Activated CD8-positive, alpha-beta T cell treated with anti-CD3 and anti-CD28 coated beads, Interleukin-2, amount 10 ng/mL, durations not matched to agents 7 days and 5 days (primary cell): ENCODE measurements at regions of chr14 and their contacts with region 1.

Region 1: GRCh38 chr14:68926236-68926635 is 52.9 kb downstream of the ACTN1 start:
- DNase-seq: peak; percentile 36
- ATAC-seq: no peak
- H3K4me3 Mint-ChIP-seq: no peak overlapping the region
- H3K27ac Mint-ChIP-seq: peak overlapping the region; percentile 54
- H3K4me1 Mint-ChIP-seq: peaks cover 68% of the 10 kb centered on the region
- H3K27me3 Mint-ChIP-seq: no peaks in the 10 kb centered on the region

Region 2: DNA sequence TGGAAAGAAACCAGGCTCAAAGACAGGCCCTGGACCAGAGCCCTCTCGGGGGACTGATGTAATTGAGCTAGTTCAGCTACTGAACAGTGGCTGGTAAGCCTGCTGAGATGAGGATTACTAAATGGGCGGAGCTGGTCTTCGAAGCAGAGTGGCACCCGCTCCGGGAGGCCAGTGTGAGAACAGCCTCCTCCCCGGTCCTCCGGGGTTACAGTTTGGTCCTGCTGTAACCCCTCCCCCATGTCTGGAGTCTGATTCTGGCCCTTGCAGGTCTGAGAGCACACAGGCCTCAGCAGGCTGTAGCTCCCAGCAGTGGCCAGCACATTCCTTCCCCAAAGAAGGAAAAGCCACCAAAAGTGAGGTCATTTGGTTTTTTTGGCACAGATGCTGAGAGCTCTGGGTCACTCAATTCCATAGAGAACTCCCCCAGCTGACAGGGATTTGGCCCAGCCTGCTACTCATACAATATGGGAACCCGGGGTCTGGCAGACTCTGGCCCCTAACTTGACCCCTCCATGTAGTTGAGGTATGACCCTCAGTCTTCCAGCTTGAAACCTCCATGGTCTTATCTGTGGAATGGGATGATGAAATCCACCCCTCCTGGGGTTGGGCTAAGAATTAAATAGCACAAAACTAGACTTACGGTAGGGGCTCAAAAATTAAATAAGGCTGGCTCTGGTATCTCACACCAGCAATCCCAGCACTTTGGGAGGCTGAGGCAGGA is 13.8 kb after region 1 on chr14:
- CTCF ChIA-PET with region 1: interaction called, 11 read pairs
- POLR2A ChIA-PET with region 1: interaction called, 5 read pairs
- DNase-seq: no peak
- ATAC-seq: no peak
- H3K4me3 Mint-ChIP-seq: no peak overlapping the region
- H3K27ac Mint-ChIP-seq: peak overlapping the region; percentile 42
- H3K4me1 Mint-ChIP-seq: peaks cover 54% of the 10 kb centered on the region
- H3K27me3 Mint-ChIP-seq: no peaks in the 10 kb centered on the region